CD4-positive, alpha-beta memory T cell (primary cell): ENCODE measurements at regions of chr17 and their contacts with region 1.

Region 1: GRCh38 chr17:43576563-43577229 is 30.6 kb upstream of the ETV4 start:
- DNase-seq: peak; percentile 50 to 69 (median 63)
- H3K4me3 ChIP-seq: no peak overlapping the region
- H3K4me3 Mint-ChIP-seq: no peak overlapping the region
- H3K27ac ChIP-seq: no peak overlapping the region
- H3K27ac Mint-ChIP-seq: peak overlapping the region in 3 of 7 donors; percentile 3 to 43 (median 35)
- H3K4me1 ChIP-seq: peaks cover 17% of the 10 kb centered on the region
- H3K4me1 Mint-ChIP-seq: peaks cover 11 to 28% (median 15%) of the 10 kb centered on the region in 4 donors
- H3K27me3 ChIP-seq: no peaks in the 10 kb centered on the region
- H3K27me3 Mint-ChIP-seq: peaks cover 0 to 2% of the 10 kb centered on the region in 2 donors

Region 2: GRCh38 chr17:43645765-43646481 is 69.2 kb after region 1 on chr17:
- CTCF ChIA-PET with region 1: interaction called, 15 read pairs
- POLR2A ChIA-PET with region 1: no interaction called
- intact Hi-C with region 1: no loop called
- DNase-seq: no peak
- H3K4me3 ChIP-seq: no peak overlapping the region
- H3K4me3 Mint-ChIP-seq: peak overlapping the region in 6 of 8 donors; percentile 44 to 76 (median 66)
- H3K27ac ChIP-seq: no peak overlapping the region
- H3K27ac Mint-ChIP-seq: peak overlapping the region in 1 of 7 donors; percentile 23
- H3K4me1 ChIP-seq: peaks cover 14% of the 10 kb centered on the region
- H3K4me1 Mint-ChIP-seq: peaks cover 3 to 27% (median 19%) of the 10 kb centered on the region in 4 donors
- H3K27me3 ChIP-seq: no peaks in the 10 kb centered on the region
- H3K27me3 Mint-ChIP-seq: peaks cover 2 to 9% of the 10 kb centered on the region in 2 donors

Region 3: GRCh38 chr17:43661699-43662412 is 85.2 kb after region 1 on chr17 and contains the start of gene MEOX1:
- CTCF ChIA-PET with region 1: interaction called, 12 read pairs
- POLR2A ChIA-PET with region 1: no interaction called
- intact Hi-C with region 1: no loop called
- DNase-seq: no peak
- H3K4me3 ChIP-seq: peak within 1 kb of the TSS in 1 of 2 donors; percentile 40
- H3K4me3 Mint-ChIP-seq: peak within 1 kb of the TSS; percentile 33 to 87 (median 69)
- H3K27ac ChIP-seq: peak within 1 kb of the TSS; percentile 20
- H3K27ac Mint-ChIP-seq: peak within 1 kb of the TSS; percentile 55 to 85 (median 73)
- H3K4me1 ChIP-seq: peaks cover 62% of the 10 kb centered on the region
- H3K4me1 Mint-ChIP-seq: peaks cover 16 to 55% (median 47%) of the 10 kb centered on the region in 4 donors
- H3K27me3 ChIP-seq: no peaks in the 10 kb centered on the region
- H3K27me3 Mint-ChIP-seq: no peaks in the 10 kb centered on the region
- total RNA-seq, gene MEOX1: 1.7 to 2.1 TPM

Region 4: DNA sequence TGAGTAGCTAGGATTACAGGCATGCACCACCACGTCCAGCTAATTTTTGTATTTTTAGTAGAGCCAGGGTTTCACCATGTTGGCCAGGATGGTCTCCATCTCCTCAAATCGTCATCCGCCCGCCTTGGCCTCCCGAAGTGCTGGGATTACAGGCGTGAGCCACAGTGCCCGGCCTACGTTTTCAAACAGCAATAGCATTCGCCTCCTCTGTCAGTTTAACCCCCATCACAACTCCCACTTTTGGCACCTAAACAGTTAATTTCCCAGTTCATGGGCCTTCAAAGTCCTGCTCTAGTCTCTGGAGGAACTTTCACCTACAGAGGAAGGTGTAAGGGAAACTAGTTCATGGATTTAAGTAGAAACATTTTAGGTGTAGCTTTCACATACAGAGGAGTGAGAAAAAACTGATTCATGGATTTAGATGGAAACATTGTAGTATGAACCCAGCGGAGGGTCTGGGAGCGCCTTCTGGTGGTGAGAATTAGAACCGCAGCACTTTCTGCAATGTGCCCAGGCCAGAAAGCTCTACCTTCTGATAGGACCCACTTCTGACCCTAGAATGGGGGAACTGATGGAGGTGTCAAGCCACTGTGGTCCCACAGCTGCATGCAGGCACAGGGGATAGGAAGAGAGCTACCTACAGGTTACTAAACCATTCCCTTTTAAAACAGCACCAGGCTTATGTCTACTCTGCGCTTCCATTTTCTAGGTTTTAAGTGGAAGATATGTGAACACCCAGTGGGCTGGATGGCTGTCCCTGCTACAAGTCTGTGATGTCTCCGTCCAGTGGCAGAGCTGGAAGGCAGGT is 97.0 kb after region 1 on chr17:
- CTCF ChIA-PET with region 1: no interaction called
- POLR2A ChIA-PET with region 1: interaction called, 16 read pairs
- intact Hi-C with region 1: loop called (anchors 1 kb)
- DNase-seq: peak; percentile 57 to 67 (median 62)
- H3K4me3 ChIP-seq: no peak overlapping the region
- H3K4me3 Mint-ChIP-seq: no peak overlapping the region
- H3K27ac ChIP-seq: no peak overlapping the region
- H3K27ac Mint-ChIP-seq: peak overlapping the region in 3 of 7 donors; percentile 6 to 68 (median 67)
- H3K4me1 ChIP-seq: peaks cover 13% of the 10 kb centered on the region
- H3K4me1 Mint-ChIP-seq: peaks cover 4 to 19% (median 12%) of the 10 kb centered on the region in 4 donors
- H3K27me3 ChIP-seq: no peaks in the 10 kb centered on the region
- H3K27me3 Mint-ChIP-seq: peaks cover 0 to 4% of the 10 kb centered on the region in 2 donors

Region 5: DNA sequence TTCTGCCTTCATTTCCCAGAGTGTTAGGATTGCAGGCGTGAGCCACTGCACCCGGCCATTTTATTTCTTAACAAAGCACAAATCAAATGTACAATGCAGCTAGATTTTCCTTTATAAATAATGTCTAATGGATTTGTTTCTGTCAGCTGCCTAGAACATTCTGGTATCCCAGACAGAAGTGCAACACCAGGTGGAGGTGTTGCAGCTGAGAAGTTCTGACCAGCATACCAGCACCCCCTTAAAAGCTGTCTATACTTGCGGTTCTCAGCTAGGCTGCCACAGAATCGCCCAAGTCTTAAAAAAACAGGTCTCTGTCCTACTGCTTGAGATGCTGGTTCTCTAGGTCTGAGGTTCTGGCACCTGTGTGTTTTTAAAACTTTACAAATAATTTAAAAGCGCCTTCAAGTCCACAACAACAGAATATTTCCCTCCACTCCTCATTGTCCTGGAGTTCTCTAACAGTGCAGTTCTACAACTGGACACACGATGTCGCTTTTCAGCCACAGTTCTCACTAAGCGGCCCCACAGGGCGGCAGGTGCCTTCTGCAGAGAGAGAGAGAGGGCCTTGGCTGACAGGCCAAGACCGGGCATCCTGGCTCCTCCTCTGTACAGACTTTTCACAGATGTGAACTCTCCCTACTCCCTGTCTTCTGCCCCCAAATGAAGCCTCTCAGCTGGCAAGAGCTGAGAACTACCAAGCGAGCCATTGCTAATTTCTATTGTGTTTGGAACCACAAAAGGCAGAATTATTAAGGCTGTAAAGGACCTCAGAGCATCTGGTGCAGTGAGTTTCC is 117.6 kb after region 1 on chr17:
- CTCF ChIA-PET with region 1: interaction called, 29 read pairs
- POLR2A ChIA-PET with region 1: no interaction called
- intact Hi-C with region 1: no loop called
- DNase-seq: peak; percentile 69 to 77 (median 74)
- H3K4me3 ChIP-seq: no peak overlapping the region
- H3K4me3 Mint-ChIP-seq: no peak overlapping the region
- H3K27ac ChIP-seq: no peak overlapping the region
- H3K27ac Mint-ChIP-seq: no peak overlapping the region
- H3K4me1 ChIP-seq: no peaks in the 10 kb centered on the region
- H3K4me1 Mint-ChIP-seq: no peaks in the 10 kb centered on the region
- H3K27me3 ChIP-seq: no peaks in the 10 kb centered on the region
- H3K27me3 Mint-ChIP-seq: peaks cover 3 to 5% of the 10 kb centered on the region in 2 donors

Region 6: DNA sequence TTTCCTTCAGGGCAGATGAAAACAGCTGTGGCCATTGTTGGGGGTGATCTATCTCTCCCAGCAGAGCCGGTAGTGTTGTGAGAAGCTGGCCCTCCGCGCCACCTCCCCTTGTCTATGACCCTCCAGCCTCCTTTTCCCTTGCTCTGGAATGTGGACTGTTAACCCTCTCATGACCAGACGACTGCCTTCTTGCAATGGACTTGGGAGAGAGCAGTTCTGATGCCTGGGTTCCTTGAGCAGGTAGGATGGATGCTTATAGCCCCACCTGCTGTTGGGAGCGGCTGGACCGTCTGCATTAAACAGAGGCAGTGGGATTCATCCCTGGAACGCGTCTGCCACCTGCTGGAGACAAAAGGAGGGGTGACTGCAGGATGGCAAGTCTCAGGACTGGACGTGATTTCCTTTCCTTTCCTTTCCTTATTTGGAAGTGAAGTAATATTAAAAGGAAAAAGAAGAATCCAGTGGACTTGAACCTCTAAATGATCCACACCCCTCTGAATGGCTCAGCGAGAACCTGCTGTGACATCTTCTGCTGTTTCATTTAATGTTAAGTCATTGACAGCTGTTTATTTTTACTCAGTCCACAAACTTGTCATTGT is 183.7 kb after region 1 on chr17:
- CTCF ChIA-PET with region 1: interaction called, 51 read pairs
- POLR2A ChIA-PET with region 1: no interaction called
- intact Hi-C with region 1: loop called (anchors 1 kb)
- DNase-seq: peak; percentile 79 to 85 (median 83)
- H3K4me3 ChIP-seq: no peak overlapping the region
- H3K4me3 Mint-ChIP-seq: no peak overlapping the region
- H3K27ac ChIP-seq: no peak overlapping the region
- H3K27ac Mint-ChIP-seq: no peak overlapping the region
- H3K4me1 ChIP-seq: no peaks in the 10 kb centered on the region
- H3K4me1 Mint-ChIP-seq: peaks cover 0 to 6% (median 4%) of the 10 kb centered on the region in 4 donors
- H3K27me3 ChIP-seq: no peaks in the 10 kb centered on the region
- H3K27me3 Mint-ChIP-seq: peaks cover 18 to 19% of the 10 kb centered on the region in 2 donors

Region 7: GRCh38 chr17:43766413-43767052 is 189.8 kb after region 1 on chr17:
- CTCF ChIA-PET with region 1: interaction called, 51 read pairs
- POLR2A ChIA-PET with region 1: no interaction called
- intact Hi-C with region 1: no loop called
- DNase-seq: peak in 3 of 5 donors; percentile 10 to 36 (median 29)
- H3K4me3 ChIP-seq: no peak overlapping the region
- H3K4me3 Mint-ChIP-seq: no peak overlapping the region
- H3K27ac ChIP-seq: no peak overlapping the region
- H3K27ac Mint-ChIP-seq: no peak overlapping the region
- H3K4me1 ChIP-seq: no peaks in the 10 kb centered on the region
- H3K4me1 Mint-ChIP-seq: no peaks in the 10 kb centered on the region
- H3K27me3 ChIP-seq: no peaks in the 10 kb centered on the region
- H3K27me3 Mint-ChIP-seq: peaks cover 0 to 2% of the 10 kb centered on the region in 2 donors